ENCODE measurements at regions of chr6 and their contacts with region 1.

Region 1: DNA sequence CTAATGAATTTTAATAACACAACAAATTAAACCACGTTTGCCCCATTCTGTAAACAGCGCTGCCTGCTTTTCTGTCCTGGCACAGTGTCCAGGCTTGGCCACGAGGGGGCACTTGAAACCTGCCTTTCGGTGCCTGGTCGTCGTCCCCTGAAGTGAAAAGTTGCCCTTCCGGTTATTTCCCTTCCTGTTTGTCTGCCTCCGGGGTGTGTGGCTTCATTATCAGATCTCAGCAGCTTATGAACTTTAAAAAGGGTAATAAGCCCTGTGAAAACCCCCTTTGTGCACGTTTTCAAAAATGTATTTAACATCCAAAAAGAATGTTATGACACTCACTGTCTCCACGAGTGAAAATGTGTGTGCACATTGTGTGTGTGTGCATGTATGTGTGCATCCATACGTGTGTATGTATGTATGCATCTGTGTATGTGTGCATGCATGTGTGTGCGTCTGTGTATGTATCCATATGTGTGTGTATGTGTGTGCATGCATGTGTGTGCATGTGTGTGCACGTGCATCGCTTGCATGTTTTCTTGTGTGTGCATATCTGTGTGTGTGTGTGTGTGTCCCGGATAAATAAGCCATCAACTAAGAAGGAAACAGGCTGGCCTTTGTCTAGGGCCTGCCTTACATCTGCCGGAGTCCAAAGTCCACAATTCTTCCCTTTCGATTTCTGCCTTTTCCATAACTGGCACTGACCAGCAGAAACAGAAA is 358.4 kb downstream of the THBS2 start:
- DNase-seq: peak; percentile 60
- ATAC-seq: peak; percentile 97
- H3K4me3 ChIP-seq: no peak overlapping the region
- H3K27ac ChIP-seq: no peak overlapping the region
- H3K4me1 ChIP-seq: no peaks in the 10 kb centered on the region
- H3K27me3 ChIP-seq: peaks cover 5% of the 10 kb centered on the region; the same call in 1 of the 2 replicates
- CTCF ChIP-seq: peak; percentile 95
- POLR2A ChIP-seq: peak; percentile 28; the same call in 1 of the 2 replicates
- RAD21 ChIP-seq: peak; percentile 97

Region 2: DNA sequence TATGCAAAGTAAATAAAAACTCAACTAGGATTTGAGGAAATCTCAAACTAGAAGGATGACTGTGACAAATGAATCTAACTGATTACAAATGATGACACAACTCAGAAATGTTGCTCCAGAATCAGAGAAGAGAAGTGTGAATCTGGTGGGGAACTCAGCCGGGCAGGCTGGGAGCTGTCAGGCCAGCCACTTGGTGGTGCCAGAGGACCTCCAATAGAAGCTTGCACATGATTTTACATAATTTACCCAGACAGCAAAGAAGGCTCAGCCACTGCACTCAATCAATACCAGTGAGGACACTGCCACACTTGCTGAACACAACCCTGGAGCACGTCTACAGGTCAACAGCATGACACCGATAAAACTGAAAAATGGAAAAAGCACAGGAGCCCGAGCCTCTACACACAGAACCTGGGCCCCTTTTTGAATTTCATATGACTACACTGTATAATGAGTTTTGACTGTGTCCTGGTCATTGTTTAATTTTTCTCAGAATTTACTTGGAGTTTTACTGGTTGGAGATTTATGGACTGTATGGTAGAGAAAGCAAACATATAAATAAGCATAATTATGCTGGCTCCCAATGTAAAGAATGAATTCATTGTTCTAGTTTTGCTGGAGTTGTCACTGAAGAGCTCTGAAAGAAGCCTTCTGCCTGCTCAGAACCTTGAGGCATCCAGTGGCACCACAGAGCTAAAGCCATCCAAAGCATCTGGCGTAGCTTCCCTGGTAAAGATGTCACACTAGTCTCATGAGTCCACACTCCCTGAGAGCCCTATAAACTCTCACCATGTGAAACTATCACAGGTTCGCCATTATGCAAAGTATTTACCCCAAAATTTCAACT is 61.9 kb after region 1 on chr6:
- CTCF ChIA-PET with region 1: interaction called, 3 read pairs
- POLR2A ChIA-PET with region 1: no interaction called
- dilution Hi-C with region 1: no loop called
- in situ Hi-C with region 1: no loop called
- intact Hi-C with region 1: loop called (anchors 1 kb)
- DNase-seq: peak; percentile 80
- ATAC-seq: peak; percentile 99
- H3K4me3 ChIP-seq: no peak overlapping the region
- H3K27ac ChIP-seq: no peak overlapping the region
- H3K4me1 ChIP-seq: peaks cover 3% of the 10 kb centered on the region
- H3K27me3 ChIP-seq: no peaks in the 10 kb centered on the region
- CTCF ChIP-seq: peak; percentile 93
- POLR2A ChIP-seq: peak; percentile 42; the same call in 1 of the 2 replicates
- RAD21 ChIP-seq: peak; percentile 97

Region 3: GRCh38 chr6:169326067-169326799 is 431.0 kb after region 1 on chr6:
- CTCF ChIA-PET with region 1: interaction called, 4 read pairs
- POLR2A ChIA-PET with region 1: no interaction called
- dilution Hi-C with region 1: no loop called
- in situ Hi-C with region 1: no loop called
- intact Hi-C with region 1: loop called (anchors 1 kb)
- DNase-seq: peak; percentile 52
- ATAC-seq: peak; percentile 43
- H3K4me3 ChIP-seq: no peak overlapping the region
- H3K27ac ChIP-seq: no peak overlapping the region
- H3K4me1 ChIP-seq: peaks cover 2% of the 10 kb centered on the region; the same call in 1 of the 2 replicates
- H3K27me3 ChIP-seq: no peaks in the 10 kb centered on the region
- CTCF ChIP-seq: peak; percentile 51
- POLR2A ChIP-seq: no peak
- RAD21 ChIP-seq: peak; percentile 66

Region 4: DNA sequence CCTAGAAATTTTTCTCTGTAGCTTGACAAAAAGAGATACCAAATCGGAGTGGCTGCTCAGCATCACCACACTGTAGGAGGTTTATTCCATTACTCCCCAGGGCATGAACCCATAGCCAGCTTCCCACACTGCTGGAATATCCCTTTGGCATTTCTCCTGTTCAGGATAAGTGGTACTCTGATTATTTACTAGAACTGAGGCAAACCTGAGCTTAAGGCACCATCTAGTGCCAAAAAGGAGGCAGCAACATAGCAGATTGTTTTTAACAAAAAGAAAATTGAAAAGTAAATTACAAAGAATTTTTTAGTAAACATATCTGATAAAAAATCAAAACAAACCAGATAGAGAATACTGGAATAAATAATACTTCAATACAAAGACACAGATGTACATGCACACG is 624.8 kb after region 1 on chr6:
- CTCF ChIA-PET with region 1: no interaction called
- POLR2A ChIA-PET with region 1: no interaction called
- dilution Hi-C with region 1: no loop called
- in situ Hi-C with region 1: loop called (anchors 10 kb)
- intact Hi-C with region 1: loop called (anchors 1 kb)
- DNase-seq: peak; percentile 70
- ATAC-seq: peak; percentile 77
- H3K4me3 ChIP-seq: no peak overlapping the region
- H3K27ac ChIP-seq: no peak overlapping the region
- H3K4me1 ChIP-seq: no peaks in the 10 kb centered on the region
- H3K27me3 ChIP-seq: no peaks in the 10 kb centered on the region
- CTCF ChIP-seq: peak; percentile 82
- POLR2A ChIP-seq: peak; percentile 32; the same call in 1 of the 2 replicates
- RAD21 ChIP-seq: peak; percentile 91

Region 5: DNA sequence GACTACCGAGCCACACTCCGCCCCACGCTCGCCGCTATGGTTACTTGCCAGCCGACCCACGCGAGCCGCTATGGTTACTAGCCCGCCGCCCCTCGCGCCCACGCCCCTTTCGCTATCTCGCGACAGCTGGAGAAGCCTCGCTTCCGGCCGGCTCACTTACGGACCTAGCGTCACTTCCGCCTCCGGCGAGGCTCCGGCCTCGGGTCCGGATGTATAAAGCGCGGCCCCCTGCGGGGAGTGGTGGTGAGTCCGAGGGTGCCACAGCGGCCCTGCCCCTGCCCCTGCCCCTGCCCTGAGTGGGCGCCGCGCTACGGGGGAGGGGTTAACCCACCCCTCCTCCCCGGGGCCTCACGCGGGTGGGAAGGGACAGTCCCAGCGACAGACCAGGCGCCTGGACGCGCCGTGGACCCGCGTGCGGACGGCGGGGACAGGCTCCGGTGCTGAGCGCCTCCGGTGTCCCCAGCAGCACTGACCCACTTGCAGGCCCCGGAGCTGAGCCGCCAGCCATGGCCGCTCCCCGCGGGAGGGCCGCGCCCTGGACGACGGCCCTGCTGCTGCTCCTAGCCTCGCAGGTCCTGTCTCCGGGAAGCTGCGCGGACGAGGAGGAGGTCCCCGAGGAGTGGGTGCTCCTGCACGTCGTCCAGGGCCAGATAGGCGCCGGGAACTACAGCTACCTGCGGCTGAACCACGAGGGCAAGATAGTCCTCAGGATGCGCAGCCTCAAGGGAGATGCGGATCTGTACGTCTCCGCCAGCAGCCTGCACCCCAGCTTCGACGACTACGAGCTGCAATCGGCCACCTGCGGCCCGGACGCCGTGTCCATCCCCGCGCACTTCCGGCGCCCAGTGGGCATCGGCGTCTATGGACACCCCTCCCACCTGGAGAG is 806.9 kb after region 1 on chr6 and contains the starts of genes C6orf120 and WDR27:
- CTCF ChIA-PET with region 1: no interaction called
- POLR2A ChIA-PET with region 1: no interaction called
- dilution Hi-C with region 1: no loop called
- in situ Hi-C with region 1: no loop called
- intact Hi-C with region 1: loop called (anchors 2 kb)
- DNase-seq: peak; percentile 95
- ATAC-seq: peak; percentile 93
- H3K4me3 ChIP-seq: peak within 1 kb of the TSS; percentile 76
- H3K27ac ChIP-seq: peak within 1 kb of the TSS; percentile 89
- H3K4me1 ChIP-seq: peaks cover 9% of the 10 kb centered on the region
- H3K27me3 ChIP-seq: no peaks in the 10 kb centered on the region
- CTCF ChIP-seq: no peak
- POLR2A ChIP-seq: peak; percentile 86
- RAD21 ChIP-seq: no peak; the same call in 1 of the 2 replicates
- total RNA-seq, gene C6orf120: 26.7 and 44.2 TPM in 2 replicates
- total RNA-seq, gene WDR27: 7.0 and 7.8 TPM in 2 replicates

Region 6: GRCh38 chr6:170529839-170530469 is 1634.7 kb after region 1 on chr6:
- CTCF ChIA-PET with region 1: no interaction called
- POLR2A ChIA-PET with region 1: no interaction called
- dilution Hi-C with region 1: no loop called
- in situ Hi-C with region 1: no loop called
- intact Hi-C with region 1: loop called (anchors 5 kb)
- DNase-seq: peak; percentile 69
- ATAC-seq: peak; percentile 88
- H3K4me3 ChIP-seq: no peak overlapping the region
- H3K27ac ChIP-seq: no peak overlapping the region
- H3K4me1 ChIP-seq: peaks cover 6% of the 10 kb centered on the region
- H3K27me3 ChIP-seq: no peaks in the 10 kb centered on the region
- CTCF ChIP-seq: peak; percentile 92
- POLR2A ChIP-seq: no peak
- RAD21 ChIP-seq: peak; percentile 95

Measured in IMR-90 (cell line).